ENCODE measurements at regions of chr5 and their contacts with region 1.

Region 1: GRCh38 chr5:57221049-57221568 is 47.2 kb downstream of the GPBP1 start:
- DNase-seq: peak; percentile 68
- H3K4me3 ChIP-seq: no peak overlapping the region
- H3K27ac ChIP-seq: no peak overlapping the region
- H3K4me1 ChIP-seq: no peaks in the 10 kb centered on the region
- CTCF ChIP-seq: peak; percentile 98

Region 2: DNA sequence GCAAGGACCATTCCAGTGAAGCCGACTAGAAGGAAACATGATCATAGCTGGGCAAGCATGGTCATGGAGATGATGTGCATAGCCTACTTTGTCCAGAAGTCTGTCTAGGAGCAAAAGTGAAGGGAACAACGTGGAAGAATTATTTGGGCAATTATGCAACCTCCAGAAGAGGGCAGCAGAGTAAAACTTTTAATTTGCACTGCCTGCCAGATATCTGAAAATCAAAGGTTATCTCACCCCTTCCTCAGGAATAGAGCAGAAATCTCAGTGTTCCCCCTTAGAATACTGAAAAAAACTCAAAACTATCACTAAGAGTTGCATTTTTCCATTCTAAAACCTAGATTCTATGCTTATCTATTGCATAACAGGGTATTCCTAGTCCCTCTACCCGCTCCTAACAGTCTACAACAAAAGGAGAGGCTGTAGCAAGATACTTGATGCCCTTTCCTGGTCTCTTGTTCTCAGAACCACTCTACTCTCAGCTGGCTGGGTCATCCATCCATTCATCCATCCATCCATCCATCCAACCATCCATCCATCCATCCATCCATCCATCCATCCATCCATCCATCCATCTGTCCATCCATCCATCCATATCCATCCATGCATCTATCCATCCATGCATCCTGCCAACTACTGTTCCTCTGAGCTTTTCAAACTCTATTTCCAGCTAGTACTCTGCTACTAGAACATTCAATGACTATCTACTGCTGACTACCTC is 320.1 kb before region 1 on chr5:
- CTCF ChIA-PET with region 1: no interaction called
- POLR2A ChIA-PET with region 1: no interaction called
- intact Hi-C with region 1: loop called (anchors 2 kb)
- DNase-seq: peak; percentile 65
- H3K4me3 ChIP-seq: no peak overlapping the region
- H3K27ac ChIP-seq: no peak overlapping the region
- H3K4me1 ChIP-seq: no peaks in the 10 kb centered on the region
- CTCF ChIP-seq: peak; percentile 88

Region 3: DNA sequence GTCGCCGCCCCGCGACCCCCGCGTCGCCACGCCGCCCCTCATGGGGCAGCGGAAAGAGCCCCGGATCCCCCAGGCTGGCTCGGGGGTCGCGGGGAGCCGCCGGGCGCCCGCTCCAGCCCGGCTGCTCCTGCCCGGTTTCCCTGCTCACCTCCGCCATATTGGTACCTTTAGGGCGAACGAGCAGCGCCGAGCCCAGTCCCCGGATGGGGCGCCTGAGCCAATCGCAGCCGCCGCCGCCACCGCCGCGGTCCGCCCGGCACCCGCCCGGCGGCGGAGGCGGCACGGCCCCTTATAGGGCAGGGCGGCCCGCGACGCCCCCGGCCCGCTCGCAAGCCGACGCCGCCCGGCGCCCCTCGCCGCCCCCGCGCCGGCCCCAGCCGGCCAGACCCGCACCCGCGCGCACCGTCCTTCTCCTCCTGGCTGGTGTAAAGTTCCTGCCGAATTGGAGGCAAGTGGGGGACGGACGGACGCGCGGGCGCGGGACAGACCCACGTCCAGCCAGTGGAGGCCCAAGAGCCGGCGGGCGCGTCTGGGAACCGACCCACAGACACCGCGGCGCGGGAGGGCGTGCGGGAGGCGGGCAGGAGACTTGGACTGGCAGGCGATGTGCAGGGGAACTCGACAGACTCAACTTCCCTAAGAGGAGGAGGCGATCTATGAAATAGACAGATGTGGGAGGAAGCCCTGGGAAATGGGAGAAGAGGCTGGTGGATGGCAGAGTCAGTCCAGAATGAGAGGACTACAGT is 269.0 kb before region 1 on chr5 and contains the start of gene MIER3:
- CTCF ChIA-PET with region 1: no interaction called
- POLR2A ChIA-PET with region 1: no interaction called
- intact Hi-C with region 1: loop called (anchors 5 kb)
- DNase-seq: peak; percentile 85
- H3K4me3 ChIP-seq: peak within 1 kb of the TSS; percentile 96
- H3K27ac ChIP-seq: peak within 1 kb of the TSS; percentile 42
- H3K4me1 ChIP-seq: peaks cover 16% of the 10 kb centered on the region
- CTCF ChIP-seq: no peak
- total RNA-seq, gene MIER3: 12.6 and 51.9 TPM in 2 replicates